ENCODE measurements at regions of chr12 and their contacts with region 1.

Region 1: DNA sequence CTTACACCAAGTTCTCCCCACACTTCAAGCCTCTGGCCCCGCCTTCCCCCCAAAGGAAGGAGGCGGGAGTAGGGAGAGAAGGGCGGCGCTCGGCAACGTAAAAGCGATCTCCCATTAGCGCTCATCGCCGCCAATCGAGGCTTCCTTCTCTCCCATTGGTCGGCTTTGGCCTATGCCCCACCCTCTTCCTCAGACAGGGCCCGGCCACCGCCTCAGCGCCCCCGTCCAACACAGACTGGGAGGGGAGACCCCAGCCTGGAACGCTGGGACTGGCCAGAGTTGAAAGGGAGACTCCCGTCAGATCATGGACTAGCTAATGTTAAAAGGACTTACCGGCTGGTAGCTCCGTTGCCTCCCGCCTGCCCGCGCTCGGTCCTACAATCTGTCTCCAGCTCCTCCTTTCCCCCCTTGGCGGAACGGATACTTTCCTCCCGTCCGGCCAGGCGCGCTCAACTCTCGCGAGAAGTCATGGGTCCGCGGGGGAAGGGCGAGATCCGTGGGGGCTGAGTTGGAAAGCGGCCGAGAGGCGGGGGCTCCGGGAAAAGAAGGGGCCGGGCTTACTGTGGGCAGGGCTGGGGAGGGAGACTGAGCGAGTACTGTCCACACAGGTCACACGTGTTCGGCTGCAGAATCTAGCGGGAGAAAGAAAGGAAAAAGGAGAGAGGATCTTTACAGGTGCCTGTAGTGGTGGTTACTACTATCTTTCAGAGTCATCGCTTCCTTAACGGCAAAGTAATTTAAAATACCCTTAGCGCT is at the start of gene ATF7:
- DNase-seq: peak; percentile 98
- H3K4me3 ChIP-seq: peak within 1 kb of the TSS; percentile 90
- H3K27ac ChIP-seq: peak within 1 kb of the TSS; percentile 43
- H3K4me1 ChIP-seq: peaks cover 29% of the 10 kb centered on the region
- CTCF ChIP-seq: no peak
- total RNA-seq, gene ATF7: 5.9 and 6.8 TPM in 2 replicates

Region 2: GRCh38 chr12:53379389-53380103 is 246.6 kb before region 1 on chr12:
- CTCF ChIA-PET with region 1: no interaction called
- POLR2A ChIA-PET with region 1: no interaction called
- intact Hi-C with region 1: loop called (anchors 5 kb)
- DNase-seq: peak; percentile 100
- H3K4me3 ChIP-seq: peak overlapping the region; percentile 86
- H3K27ac ChIP-seq: peak overlapping the region; percentile 77
- H3K4me1 ChIP-seq: peaks cover 45% of the 10 kb centered on the region
- CTCF ChIP-seq: no peak